ENCODE measurements at regions of chr4 and their contacts with region 1.

Region 1: GRCh38 chr4:54099748-54100574 is at the start of gene GSX2:
- DNase-seq: peak; percentile 59
- H3K4me3 Mint-ChIP-seq: peak within 1 kb of the TSS; percentile 59
- H3K27ac Mint-ChIP-seq: no peak within 1 kb of the TSS
- H3K4me1 Mint-ChIP-seq: peaks cover 31% of the 10 kb centered on the region
- H3K27me3 Mint-ChIP-seq: peaks cover 90% of the 10 kb centered on the region
- total RNA-seq, gene GSX2: not detected in 2 replicates

Region 2: DNA sequence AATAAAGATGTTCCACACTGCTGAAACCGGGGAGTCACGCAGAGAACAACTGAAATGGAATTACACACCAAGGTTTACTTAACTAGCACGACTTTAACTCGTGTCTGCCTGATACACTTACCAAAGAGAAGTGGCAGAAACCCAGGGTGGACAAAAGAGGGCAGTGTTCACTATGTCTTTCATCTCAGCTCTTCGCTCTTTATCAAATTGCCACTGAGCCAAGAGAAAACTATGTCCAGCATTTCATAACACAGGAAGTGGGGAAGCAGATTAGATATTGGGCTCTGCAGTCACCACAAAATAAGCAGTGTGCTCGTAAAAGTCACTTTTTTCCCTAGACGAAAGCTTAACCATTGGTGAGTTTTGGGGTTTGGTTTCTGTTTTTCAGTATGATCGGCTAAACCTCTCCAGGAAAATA is 191.3 kb before region 1 on chr4:
- intact Hi-C with region 1: loop called (anchors 5 kb)
- DNase-seq: peak; percentile 68
- H3K4me3 Mint-ChIP-seq: no peak overlapping the region
- H3K27ac Mint-ChIP-seq: no peak overlapping the region
- H3K4me1 Mint-ChIP-seq: peaks cover 7% of the 10 kb centered on the region
- H3K27me3 Mint-ChIP-seq: peaks cover 34% of the 10 kb centered on the region

Region 3: DNA sequence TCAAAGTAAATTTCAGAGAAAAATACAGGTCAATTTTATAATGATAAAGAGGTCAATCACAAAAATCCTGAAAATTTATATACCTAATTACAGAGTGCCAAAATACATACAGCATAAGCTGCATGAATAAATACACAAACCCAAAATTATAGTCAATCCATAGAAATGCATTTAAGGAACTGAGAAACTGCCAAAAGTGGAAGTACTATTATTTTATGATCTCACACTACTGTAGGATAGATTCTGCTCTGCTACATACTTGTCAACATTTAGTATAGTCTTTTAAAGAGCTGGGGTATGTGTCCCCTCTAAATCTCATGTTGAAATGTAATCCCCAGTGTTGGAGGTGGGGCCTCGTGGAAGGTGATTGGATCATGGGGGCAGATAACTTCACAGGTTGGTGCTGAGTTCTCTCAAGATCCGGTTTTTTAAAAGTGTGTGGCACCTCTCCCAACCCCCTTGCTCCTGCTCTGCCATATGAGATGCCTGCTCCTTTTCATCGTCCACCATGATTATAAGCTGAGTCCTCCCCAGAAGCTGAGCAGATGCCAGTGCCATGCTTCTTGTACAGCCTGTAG is 67.3 kb before region 1 on chr4:
- intact Hi-C with region 1: no loop called
- DNase-seq: no peak
- H3K4me3 Mint-ChIP-seq: no peak overlapping the region
- H3K27ac Mint-ChIP-seq: no peak overlapping the region
- H3K4me1 Mint-ChIP-seq: no peaks in the 10 kb centered on the region
- H3K27me3 Mint-ChIP-seq: no peaks in the 10 kb centered on the region

Region 4: GRCh38 chr4:54127660-54128059 is 27.7 kb after region 1 on chr4:
- intact Hi-C with region 1: no loop called
- DNase-seq: no peak
- H3K4me3 Mint-ChIP-seq: no peak overlapping the region
- H3K27ac Mint-ChIP-seq: no peak overlapping the region
- H3K4me1 Mint-ChIP-seq: no peaks in the 10 kb centered on the region
- H3K27me3 Mint-ChIP-seq: no peaks in the 10 kb centered on the region

Region 5: DNA sequence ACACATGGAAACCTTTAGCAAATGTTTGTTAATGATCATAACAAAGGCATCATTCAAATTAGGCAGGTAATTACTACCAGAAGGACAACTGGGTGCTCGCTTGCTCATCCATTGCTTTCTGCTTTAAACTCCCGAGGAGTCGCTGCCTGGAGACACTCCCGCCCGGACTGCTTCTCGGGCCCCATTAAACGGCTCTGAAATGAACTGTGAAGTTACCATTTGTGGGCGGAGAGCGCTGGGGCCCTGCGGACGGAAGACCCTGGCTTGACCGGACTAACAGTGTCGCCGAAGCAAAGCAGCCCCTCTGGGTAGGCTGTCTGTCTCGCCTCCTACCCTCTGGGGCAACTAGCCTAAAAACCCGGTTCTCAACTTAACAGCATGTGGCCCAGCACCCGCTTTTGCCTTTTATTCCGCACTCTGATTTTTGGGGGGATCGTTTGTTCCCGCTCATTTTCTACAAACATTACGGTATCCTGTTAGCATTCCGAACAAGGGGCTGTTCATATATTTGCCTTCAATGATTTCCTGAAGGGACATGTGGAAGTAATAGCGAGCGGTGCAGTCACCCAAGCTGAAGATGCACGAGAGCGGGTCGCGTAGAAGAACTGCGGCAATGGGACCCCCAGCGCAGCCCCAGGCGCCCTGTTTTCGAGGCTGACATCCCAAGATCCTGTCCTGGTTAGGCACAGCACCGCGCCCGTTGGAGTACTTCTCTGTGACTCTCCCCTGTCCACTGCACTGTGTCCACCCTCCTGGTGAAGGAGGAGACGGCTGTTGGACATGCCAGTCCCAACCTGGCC is 127.5 kb after region 1 on chr4:
- intact Hi-C with region 1: loop called (anchors 1 kb)
- DNase-seq: peak; percentile 56
- H3K4me3 Mint-ChIP-seq: peak overlapping the region; percentile 45
- H3K27ac Mint-ChIP-seq: peak overlapping the region; percentile 24
- H3K4me1 Mint-ChIP-seq: peaks cover 26% of the 10 kb centered on the region
- H3K27me3 Mint-ChIP-seq: peaks cover 87% of the 10 kb centered on the region